Heart left ventricle (tissue), 16 donors: ENCODE measurements at regions of chr3 and their contacts with region 1.

Region 1: DNA sequence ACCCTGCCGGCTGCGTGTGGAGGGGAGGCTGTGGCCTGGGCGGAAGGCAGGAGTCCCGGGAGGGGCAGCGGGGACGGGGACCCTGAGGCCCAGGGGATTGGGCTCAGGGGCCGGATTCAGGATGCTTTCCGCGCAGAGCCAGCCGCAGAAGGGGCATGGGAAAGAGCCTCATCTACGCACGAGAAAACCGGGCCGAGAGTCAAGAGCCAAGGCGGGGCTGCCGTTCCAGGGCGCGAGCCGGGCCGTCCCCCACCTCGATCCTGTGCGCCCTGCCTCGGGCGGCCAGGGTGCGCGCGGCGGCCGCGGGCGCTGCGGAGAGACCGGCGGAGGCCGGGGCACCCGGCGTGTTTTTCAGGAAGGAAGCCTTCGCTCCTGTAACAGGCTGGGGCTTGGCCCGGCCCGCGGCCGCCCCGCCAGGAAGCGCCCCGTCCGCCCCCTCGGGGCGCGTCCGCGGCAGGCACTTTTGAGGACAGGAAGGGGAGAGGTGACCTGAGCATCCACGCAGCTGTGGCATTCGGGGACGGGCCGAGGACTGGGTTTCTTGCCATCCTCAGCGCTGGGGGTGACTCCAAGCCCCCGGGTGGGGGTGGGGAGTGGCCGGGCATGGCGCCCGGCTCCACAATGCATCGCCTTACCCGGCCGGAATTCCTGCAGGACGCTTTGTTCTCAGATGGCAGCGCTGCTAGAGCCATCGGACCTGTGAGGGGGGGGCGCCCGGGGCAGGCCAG is 62.3 kb upstream of the GATA2 start:
- DNase-seq: peak; percentile 63 to 84 (median 67)
- ATAC-seq: peak; percentile 63 to 75 (median 74)
- H3K4me3 ChIP-seq: peak overlapping the region in 7 of 12 donors; percentile 4 to 31 (median 28)
- H3K27ac ChIP-seq: peak overlapping the region; percentile 45 to 81 (median 69)
- H3K4me1 ChIP-seq: peaks cover 0 to 28% (median 11%) of the 10 kb centered on the region in 12 donors
- H3K27me3 ChIP-seq: peaks cover 0 to 50% (median 26%) of the 10 kb centered on the region in 9 donors
- CTCF ChIP-seq: no peak
- POLR2A ChIP-seq: peak in 1 of 2 donors; percentile 26

Region 2: GRCh38 chr3:128572644-128573105 is 17.4 kb after region 1 on chr3:
- intact Hi-C with region 1: loop called in 2 of 10 experiments (anchors 2 kb)
- DNase-seq: no peak
- ATAC-seq: no peak
- H3K4me3 ChIP-seq: no peak overlapping the region
- H3K27ac ChIP-seq: peak overlapping the region in 1 of 12 donors; percentile 76
- H3K4me1 ChIP-seq: peaks cover 0 to 33% (median 16%) of the 10 kb centered on the region in 12 donors
- H3K27me3 ChIP-seq: peaks cover 0 to 17% (median 0%) of the 10 kb centered on the region in 9 donors
- CTCF ChIP-seq: peak in 4 of 12 donors; percentile 20 to 26 (median 24)
- POLR2A ChIP-seq: no peak